ENCODE measurements at regions of chr10 and their contacts with region 1.

Region 1: DNA sequence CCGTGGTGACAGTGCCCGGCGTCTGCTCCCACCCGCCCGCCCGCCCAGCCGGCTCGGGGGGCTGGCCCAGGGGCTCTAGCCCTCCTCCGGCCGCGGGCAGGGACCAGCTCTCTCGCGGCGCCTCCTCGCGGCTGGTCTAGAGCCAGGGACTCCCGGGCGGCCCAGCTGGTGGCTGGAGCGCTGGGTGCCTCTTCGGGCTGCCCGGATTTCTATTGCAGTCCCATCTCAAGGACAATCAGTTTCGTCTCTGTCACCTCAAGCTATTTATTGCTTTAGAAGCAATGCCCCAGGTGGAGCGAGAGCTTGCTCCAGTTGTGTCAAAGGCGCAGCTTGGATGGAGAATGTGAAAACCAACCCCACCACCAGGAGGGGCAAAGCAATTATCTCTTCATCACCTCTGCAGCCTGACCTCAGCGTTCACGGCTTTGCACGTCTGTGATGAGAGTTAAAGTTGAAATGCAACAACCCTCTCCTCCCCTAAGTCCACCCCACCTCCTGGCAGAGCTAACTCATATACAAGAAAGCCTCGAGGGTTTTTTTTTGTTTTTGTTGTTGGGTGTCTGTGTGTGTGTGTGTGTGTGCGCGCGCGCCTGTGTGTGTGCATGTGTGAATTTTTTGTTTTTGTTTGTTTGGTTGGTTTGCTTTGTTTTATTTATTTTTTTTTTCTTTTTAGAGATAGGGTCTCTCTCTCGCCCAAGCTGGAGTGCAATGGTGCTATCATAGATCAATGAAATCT is at the start of gene ITGA8:
- DNase-seq: peak; percentile 59
- ATAC-seq: peak; percentile 64
- H3K4me3 Mint-ChIP-seq: peak within 1 kb of the TSS; percentile 90
- H3K27ac Mint-ChIP-seq: no peak within 1 kb of the TSS
- H3K4me1 Mint-ChIP-seq: peaks cover 19% of the 10 kb centered on the region
- H3K27me3 Mint-ChIP-seq: peaks cover 41% of the 10 kb centered on the region
- CTCF ChIP-seq: peak; percentile 37
- total RNA-seq, gene ITGA8: 0.02 TPM in 1 of 3 replicates, not detected in the others

Region 2: GRCh38 chr10:15427843-15428414 is 292.1 kb before region 1 on chr10:
- CTCF ChIA-PET with region 1: interaction called, 10 read pairs
- POLR2A ChIA-PET with region 1: no interaction called
- DNase-seq: no peak
- ATAC-seq: peak; percentile 64
- H3K4me3 Mint-ChIP-seq: no peak overlapping the region
- H3K27ac Mint-ChIP-seq: no peak overlapping the region
- H3K4me1 Mint-ChIP-seq: no peaks in the 10 kb centered on the region
- H3K27me3 Mint-ChIP-seq: no peaks in the 10 kb centered on the region
- CTCF ChIP-seq: peak; percentile 20; the same call in 1 of the 2 replicates

Region 3: GRCh38 chr10:15439341-15439842 is 280.7 kb before region 1 on chr10:
- CTCF ChIA-PET with region 1: interaction called, 36 read pairs
- POLR2A ChIA-PET with region 1: no interaction called
- DNase-seq: peak; percentile 30
- ATAC-seq: peak; percentile 83
- H3K4me3 Mint-ChIP-seq: peak overlapping the region; percentile 16; the same call in 1 of the 2 replicates
- H3K27ac Mint-ChIP-seq: no peak overlapping the region
- H3K4me1 Mint-ChIP-seq: peaks cover 15% of the 10 kb centered on the region
- H3K27me3 Mint-ChIP-seq: peaks cover 4% of the 10 kb centered on the region
- CTCF ChIP-seq: no peak

Region 4: DNA sequence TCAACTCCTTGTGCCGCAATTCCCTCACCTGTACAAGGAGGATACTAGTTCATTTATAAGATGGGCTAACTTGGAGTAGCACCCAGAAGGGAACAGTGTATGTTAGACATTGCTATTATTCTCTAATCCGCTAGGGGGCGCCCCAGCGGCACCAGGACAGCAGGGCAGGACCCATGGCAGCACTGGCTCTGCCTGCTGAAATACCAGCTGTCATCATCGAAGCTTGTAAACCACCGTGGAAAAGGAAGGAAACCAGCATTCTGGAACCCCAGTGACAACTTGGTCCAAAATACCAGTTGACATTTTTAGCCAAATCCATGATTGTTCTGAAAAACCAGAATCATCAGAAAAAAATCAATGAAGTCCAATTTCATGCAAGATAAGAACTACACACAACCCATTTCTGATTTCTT is 134.8 kb before region 1 on chr10:
- CTCF ChIA-PET with region 1: interaction called, 20 read pairs
- POLR2A ChIA-PET with region 1: no interaction called
- DNase-seq: peak; percentile 74
- ATAC-seq: peak; percentile 99
- H3K4me3 Mint-ChIP-seq: no peak overlapping the region
- H3K27ac Mint-ChIP-seq: no peak overlapping the region
- H3K4me1 Mint-ChIP-seq: no peaks in the 10 kb centered on the region
- H3K27me3 Mint-ChIP-seq: no peaks in the 10 kb centered on the region; the same call in 1 of the 2 replicates
- CTCF ChIP-seq: peak; percentile 90

Region 5: DNA sequence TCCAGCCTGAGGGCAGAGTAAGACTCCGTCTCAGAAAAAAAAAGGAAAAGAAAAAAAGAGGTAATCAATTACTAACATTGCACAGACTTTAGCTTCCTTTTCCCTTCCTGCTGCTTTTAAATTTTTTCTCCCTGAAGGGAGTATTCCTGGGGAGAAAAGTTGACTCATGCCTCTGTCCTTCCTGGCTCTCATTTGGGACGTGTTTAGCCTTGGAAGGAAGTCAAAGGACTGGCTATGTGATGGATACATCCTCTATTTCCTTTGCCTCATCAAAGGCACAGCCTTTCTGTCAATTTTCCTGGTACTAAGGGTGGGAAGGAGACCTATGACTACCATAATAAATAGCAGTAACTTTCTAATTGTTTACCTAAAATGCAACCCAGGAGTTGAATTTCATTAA is 78.0 kb before region 1 on chr10:
- CTCF ChIA-PET with region 1: interaction called, 10 read pairs
- POLR2A ChIA-PET with region 1: no interaction called
- DNase-seq: no peak
- ATAC-seq: no peak
- H3K4me3 Mint-ChIP-seq: no peak overlapping the region
- H3K27ac Mint-ChIP-seq: no peak overlapping the region
- H3K4me1 Mint-ChIP-seq: no peaks in the 10 kb centered on the region
- H3K27me3 Mint-ChIP-seq: no peaks in the 10 kb centered on the region
- CTCF ChIP-seq: no peak

Region 6: GRCh38 chr10:15661574-15661973 is 58.5 kb before region 1 on chr10:
- CTCF ChIA-PET with region 1: interaction called, 10 read pairs
- POLR2A ChIA-PET with region 1: no interaction called
- DNase-seq: no peak
- ATAC-seq: no peak
- H3K4me3 Mint-ChIP-seq: no peak overlapping the region
- H3K27ac Mint-ChIP-seq: no peak overlapping the region
- H3K4me1 Mint-ChIP-seq: no peaks in the 10 kb centered on the region
- H3K27me3 Mint-ChIP-seq: no peaks in the 10 kb centered on the region
- CTCF ChIP-seq: no peak

Region 7: DNA sequence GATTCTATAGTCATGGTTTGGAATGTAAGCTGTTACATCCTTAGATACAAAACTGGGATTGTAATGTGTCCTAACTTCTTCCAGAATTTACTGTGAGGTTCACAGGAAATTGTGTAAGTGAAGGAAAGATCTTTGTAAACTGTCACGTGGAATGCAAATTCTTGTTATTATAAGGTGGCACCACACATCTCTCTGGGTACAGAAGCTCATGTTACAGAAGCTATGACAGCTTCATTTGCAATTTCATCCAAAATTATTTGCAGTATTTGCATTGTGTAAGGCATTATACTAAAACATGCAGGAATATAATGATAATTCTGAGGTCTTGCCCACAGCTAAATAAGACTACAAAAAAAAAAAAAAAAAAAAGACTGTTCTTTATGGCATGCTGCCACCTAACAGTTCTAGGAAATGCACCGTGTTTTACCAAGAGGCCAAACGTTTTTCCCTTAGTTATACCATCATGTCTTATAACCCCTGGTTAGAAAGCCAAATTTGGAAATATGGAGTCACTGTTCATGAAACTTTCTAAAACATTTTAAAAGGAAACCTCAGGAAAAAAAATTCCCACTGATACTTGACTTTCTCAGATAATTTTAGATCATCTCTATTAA is 122.6 kb after region 1 on chr10:
- CTCF ChIA-PET with region 1: no interaction called
- POLR2A ChIA-PET with region 1: no interaction called
- DNase-seq: no peak
- ATAC-seq: no peak
- H3K4me3 Mint-ChIP-seq: no peak overlapping the region
- H3K27ac Mint-ChIP-seq: no peak overlapping the region
- H3K4me1 Mint-ChIP-seq: no peaks in the 10 kb centered on the region
- H3K27me3 Mint-ChIP-seq: no peaks in the 10 kb centered on the region
- CTCF ChIP-seq: no peak

Region 8: DNA sequence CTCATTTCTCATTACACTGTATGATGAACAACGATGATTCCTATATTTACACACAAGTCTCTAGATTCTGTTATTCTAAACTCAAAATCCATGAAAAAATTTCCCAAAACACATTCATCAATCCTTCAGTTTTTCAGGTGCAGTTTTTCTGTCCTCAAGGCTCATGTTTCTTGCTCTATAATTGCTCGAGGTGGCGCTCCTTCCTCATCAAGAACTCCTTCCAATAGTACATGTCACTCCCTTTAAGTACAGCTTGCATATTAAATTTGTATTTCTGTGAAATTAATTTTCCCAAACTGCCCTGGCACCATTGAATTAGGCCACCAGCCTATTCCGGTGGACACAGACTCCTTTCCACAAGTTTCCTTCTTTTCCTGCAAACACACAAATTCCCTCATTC is 329.0 kb after region 1 on chr10:
- CTCF ChIA-PET with region 1: no interaction called
- POLR2A ChIA-PET with region 1: no interaction called
- DNase-seq: no peak
- ATAC-seq: no peak
- H3K4me3 Mint-ChIP-seq: no peak overlapping the region
- H3K27ac Mint-ChIP-seq: no peak overlapping the region
- H3K4me1 Mint-ChIP-seq: peaks cover 4% of the 10 kb centered on the region; the same call in 1 of the 2 replicates
- H3K27me3 Mint-ChIP-seq: no peaks in the 10 kb centered on the region
- CTCF ChIP-seq: no peak

Measured in WTC11 (cell line).